ENCODE measurements at regions of chr12 and their contacts with region 1.

Region 1: GRCh38 chr12:49264738-49265515 is at the start of gene TUBA1C:
- DNase-seq: peak; percentile 95 to 99 (median 98)
- ATAC-seq: peak; percentile 85
- H3K4me3 ChIP-seq: peak within 1 kb of the TSS; percentile 90
- H3K27ac ChIP-seq: peak within 1 kb of the TSS; percentile 83
- H3K4me1 ChIP-seq: peaks cover 17 to 23% of the 10 kb centered on the region in 2 experiments
- H3K27me3 ChIP-seq: no peaks in the 10 kb centered on the region
- CTCF ChIP-seq: peak in 1 of 3 experiments; percentile 13; a peak in 1 of 6 replicates
- EP300 ChIP-seq: peak; percentile 15; the same call in 1 of the 2 replicates
- POLR2A ChIP-seq: peak; percentile 100
- RAD21 ChIP-seq: no peak
- polyA plus RNA-seq, gene TUBA1C: 776 to 1,185 TPM

Region 2: DNA sequence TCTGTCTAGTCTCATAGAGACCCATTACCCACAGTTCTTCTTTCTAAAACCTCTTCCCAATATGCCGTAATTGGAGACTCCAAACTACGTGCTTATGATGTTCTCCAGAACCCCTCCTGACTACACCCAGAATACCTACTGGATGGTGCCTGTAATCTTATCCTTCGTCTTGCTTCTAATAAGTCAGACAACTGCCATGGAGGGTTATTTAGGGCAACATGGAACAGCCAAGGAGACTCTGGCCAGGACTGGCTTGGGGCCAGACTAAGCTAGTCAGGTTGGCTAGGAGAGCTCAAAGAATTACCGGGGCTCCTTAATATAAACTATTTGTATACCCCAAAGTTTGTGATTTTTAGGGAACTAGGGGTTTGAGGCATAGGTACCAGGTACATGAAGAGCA is 1138.9 kb before region 1 on chr12:
- CTCF ChIA-PET with region 1: no interaction called
- POLR2A ChIA-PET with region 1: no interaction called
- in situ Hi-C with region 1: no loop called
- intact Hi-C with region 1: no loop called
- DNase-seq: no peak
- ATAC-seq: no peak
- H3K4me3 ChIP-seq: no peak overlapping the region
- H3K27ac ChIP-seq: no peak overlapping the region
- H3K4me1 ChIP-seq: peaks cover 4 to 9% of the 10 kb centered on the region in 2 experiments; a peak in 4 of 5 replicates
- H3K27me3 ChIP-seq: no peaks in the 10 kb centered on the region
- CTCF ChIP-seq: no peak
- EP300 ChIP-seq: no peak
- POLR2A ChIP-seq: no peak
- RAD21 ChIP-seq: no peak

Region 3: DNA sequence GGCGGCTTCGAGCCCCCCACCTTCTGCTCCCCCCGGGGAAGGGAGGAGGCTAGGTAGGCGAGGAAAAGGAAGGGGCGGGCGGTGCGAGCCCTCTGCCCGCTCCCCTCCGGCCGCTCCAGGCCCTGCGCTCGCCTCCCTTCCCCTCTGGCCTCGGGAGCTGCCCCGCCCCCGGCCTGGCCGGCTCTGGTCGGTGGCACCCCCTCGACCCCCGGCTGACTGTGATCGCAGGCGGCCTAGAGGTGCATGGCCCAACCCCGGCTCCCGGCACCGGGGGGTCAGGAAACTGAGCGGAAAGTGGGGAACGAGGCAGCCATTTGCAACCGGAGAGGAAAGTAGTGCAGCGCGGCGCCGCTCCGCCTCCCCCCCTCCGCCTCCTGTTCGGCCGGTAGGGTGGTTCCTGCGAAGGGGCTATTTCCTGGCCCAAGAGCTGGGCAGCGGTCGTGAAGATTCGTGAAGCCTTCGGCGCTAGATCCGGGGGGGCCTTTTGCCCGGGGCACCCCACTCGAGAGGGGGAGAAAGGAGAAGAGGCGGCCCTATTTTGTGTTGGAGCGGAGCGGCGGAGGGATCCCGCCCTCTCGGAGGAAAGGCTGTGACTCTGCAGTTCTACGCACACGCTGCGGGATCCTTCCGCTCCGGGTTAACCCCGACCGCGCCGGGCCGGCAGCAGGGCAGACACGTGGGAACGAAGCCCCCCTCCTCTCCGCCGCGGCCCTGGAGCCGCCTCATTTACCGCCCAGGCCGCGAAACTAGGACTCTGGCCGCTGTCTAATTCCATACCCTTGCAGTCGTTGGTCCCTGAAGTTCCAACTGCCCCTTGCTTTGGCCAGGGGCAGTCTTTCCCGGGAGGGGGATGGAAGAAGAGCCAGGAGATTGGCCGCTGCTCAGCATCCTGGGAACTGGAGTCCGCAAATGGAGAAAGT is 204.4 kb before region 1 on chr12 and contains the start of gene KMT2D:
- CTCF ChIA-PET with region 1: no interaction called
- POLR2A ChIA-PET with region 1: interaction called, 21 read pairs
- in situ Hi-C with region 1: no loop called
- intact Hi-C with region 1: no loop called
- DNase-seq: peak; percentile 89 to 96 (median 91)
- ATAC-seq: peak; percentile 72
- H3K4me3 ChIP-seq: peak within 1 kb of the TSS; percentile 94
- H3K27ac ChIP-seq: peak within 1 kb of the TSS; percentile 98
- H3K4me1 ChIP-seq: peaks cover 15 to 20% of the 10 kb centered on the region in 2 experiments; a peak in 4 of 5 replicates
- H3K27me3 ChIP-seq: no peaks in the 10 kb centered on the region
- CTCF ChIP-seq: 0 out of 6 replicates have a peak, but pooled peaks of 2 of the 3 experiments have one; percentile 6 to 13
- EP300 ChIP-seq: peak; percentile 53; the same call in 1 of the 2 replicates
- POLR2A ChIP-seq: peak; percentile 88
- RAD21 ChIP-seq: no peak
- polyA plus RNA-seq, gene KMT2D: 0.22 to 1.4 TPM

Region 4: GRCh38 chr12:49110464-49111155 is 154.3 kb before region 1 on chr12 and contains the start of gene LMBR1L:
- CTCF ChIA-PET with region 1: no interaction called
- POLR2A ChIA-PET with region 1: interaction called, 19 read pairs
- in situ Hi-C with region 1: no loop called
- intact Hi-C with region 1: no loop called
- DNase-seq: peak; percentile 99 to 100 (median 99)
- ATAC-seq: peak; percentile 97
- H3K4me3 ChIP-seq: peak within 1 kb of the TSS; percentile 81
- H3K27ac ChIP-seq: peak within 1 kb of the TSS; percentile 84
- H3K4me1 ChIP-seq: peaks cover 15 to 26% of the 10 kb centered on the region in 2 experiments; a peak in 4 of 5 replicates
- H3K27me3 ChIP-seq: no peaks in the 10 kb centered on the region
- CTCF ChIP-seq: peak; percentile 55 to 60 (median 56); a peak in 5 of 6 replicates
- EP300 ChIP-seq: no peak
- POLR2A ChIP-seq: peak; percentile 79
- RAD21 ChIP-seq: no peak; a peak in 2 of 4 replicates
- polyA plus RNA-seq, gene LMBR1L: 2.5 to 5.3 TPM

Region 5: GRCh38 chr12:49225556-49226181 is 39.3 kb before region 1 on chr12:
- CTCF ChIA-PET with region 1: no interaction called
- POLR2A ChIA-PET with region 1: interaction called, 38 read pairs
- in situ Hi-C with region 1: no loop called
- intact Hi-C with region 1: no loop called
- DNase-seq: peak in 1 of 4 experiments; percentile 59
- ATAC-seq: peak; percentile 87
- H3K4me3 ChIP-seq: no peak overlapping the region
- H3K27ac ChIP-seq: no peak overlapping the region
- H3K4me1 ChIP-seq: peaks cover 0 to 12% of the 10 kb centered on the region in 2 experiments; a peak in 3 of 5 replicates
- H3K27me3 ChIP-seq: no peaks in the 10 kb centered on the region
- CTCF ChIP-seq: peak; percentile 46 to 59 (median 47)
- EP300 ChIP-seq: no peak
- POLR2A ChIP-seq: no peak
- RAD21 ChIP-seq: peak; percentile 34 to 50

Region 6: GRCh38 chr12:49253088-49253487 is 11.8 kb before region 1 on chr12:
- CTCF ChIA-PET with region 1: no interaction called
- POLR2A ChIA-PET with region 1: interaction called, 61 read pairs
- in situ Hi-C with region 1: no loop called
- intact Hi-C with region 1: no loop called
- DNase-seq: no peak
- ATAC-seq: no peak
- H3K4me3 ChIP-seq: no peak overlapping the region
- H3K27ac ChIP-seq: no peak overlapping the region
- H3K4me1 ChIP-seq: peaks cover 12 to 16% of the 10 kb centered on the region in 2 experiments
- H3K27me3 ChIP-seq: no peaks in the 10 kb centered on the region
- CTCF ChIP-seq: no peak
- EP300 ChIP-seq: no peak
- POLR2A ChIP-seq: no peak
- RAD21 ChIP-seq: no peak

Region 7: DNA sequence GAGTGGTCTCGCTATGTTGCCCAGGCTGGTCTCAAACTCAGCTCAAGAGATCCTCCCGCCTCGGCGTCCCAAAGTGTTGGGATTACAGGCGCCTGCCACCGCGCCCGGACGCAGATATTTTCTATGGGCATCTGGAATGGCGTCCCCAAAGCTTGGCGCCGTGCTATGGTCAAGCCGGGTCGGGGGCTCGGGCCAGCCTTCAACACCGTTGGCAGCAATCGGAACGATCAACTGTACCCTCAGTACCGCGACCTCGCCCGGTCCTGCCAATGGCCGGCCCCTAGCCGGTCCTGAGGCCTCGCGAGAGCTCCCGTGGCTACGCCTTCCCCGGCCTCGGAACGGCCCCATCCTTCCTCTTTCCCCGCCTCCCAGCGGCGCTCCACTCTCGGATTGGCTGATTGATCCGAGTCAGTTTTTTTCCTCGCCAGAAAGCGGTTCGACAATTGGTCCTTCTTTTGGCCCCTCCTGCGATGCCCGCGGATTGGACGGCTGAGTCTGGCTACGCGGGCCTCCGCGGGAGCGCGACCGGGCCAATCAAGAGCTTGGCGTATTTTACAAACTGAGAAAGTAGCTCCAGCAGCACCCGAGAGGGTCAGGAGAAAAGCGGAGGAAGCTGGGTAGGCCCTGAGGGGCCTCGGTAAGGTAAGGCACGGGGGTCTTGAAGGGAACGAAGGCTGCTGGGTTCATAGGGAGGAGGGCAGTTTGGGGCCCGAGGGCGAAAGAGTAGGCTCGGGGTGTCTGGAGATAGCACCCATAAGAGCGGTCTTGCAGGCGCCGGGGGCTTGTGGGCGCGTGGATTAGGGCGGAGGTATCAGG is 58.0 kb after region 1 on chr12 and contains the start of gene TROAP:
- CTCF ChIA-PET with region 1: no interaction called
- POLR2A ChIA-PET with region 1: interaction called, 17 read pairs
- in situ Hi-C with region 1: no loop called
- intact Hi-C with region 1: no loop called
- DNase-seq: peak; percentile 99
- ATAC-seq: peak; percentile 98
- H3K4me3 ChIP-seq: peak within 1 kb of the TSS; percentile 74
- H3K27ac ChIP-seq: peak within 1 kb of the TSS; percentile 85
- H3K4me1 ChIP-seq: peaks cover 5 to 16% of the 10 kb centered on the region in 2 experiments; a peak in 3 of 5 replicates
- H3K27me3 ChIP-seq: no peaks in the 10 kb centered on the region
- CTCF ChIP-seq: no peak
- EP300 ChIP-seq: no peak
- POLR2A ChIP-seq: peak; percentile 93
- RAD21 ChIP-seq: no peak; a peak in 1 of 4 replicates
- polyA plus RNA-seq, gene TROAP: 52.1 to 53.7 TPM

Region 8: GRCh38 chr12:49366652-49367380 is 101.9 kb after region 1 on chr12:
- CTCF ChIA-PET with region 1: no interaction called
- POLR2A ChIA-PET with region 1: interaction called, 17 read pairs
- in situ Hi-C with region 1: no loop called
- intact Hi-C with region 1: no loop called
- DNase-seq: peak; percentile 75 to 97 (median 96)
- ATAC-seq: peak; percentile 90
- H3K4me3 ChIP-seq: peak overlapping the region; percentile 75
- H3K27ac ChIP-seq: peak overlapping the region; percentile 96
- H3K4me1 ChIP-seq: peaks cover 12 to 25% of the 10 kb centered on the region in 2 experiments; a peak in 3 of 5 replicates
- H3K27me3 ChIP-seq: no peaks in the 10 kb centered on the region
- CTCF ChIP-seq: peak in 2 of 3 experiments; percentile 34 to 35; a peak in 2 of 6 replicates
- EP300 ChIP-seq: no peak
- POLR2A ChIP-seq: peak; percentile 97
- RAD21 ChIP-seq: no peak; a peak in 1 of 4 replicates

Region 9: DNA sequence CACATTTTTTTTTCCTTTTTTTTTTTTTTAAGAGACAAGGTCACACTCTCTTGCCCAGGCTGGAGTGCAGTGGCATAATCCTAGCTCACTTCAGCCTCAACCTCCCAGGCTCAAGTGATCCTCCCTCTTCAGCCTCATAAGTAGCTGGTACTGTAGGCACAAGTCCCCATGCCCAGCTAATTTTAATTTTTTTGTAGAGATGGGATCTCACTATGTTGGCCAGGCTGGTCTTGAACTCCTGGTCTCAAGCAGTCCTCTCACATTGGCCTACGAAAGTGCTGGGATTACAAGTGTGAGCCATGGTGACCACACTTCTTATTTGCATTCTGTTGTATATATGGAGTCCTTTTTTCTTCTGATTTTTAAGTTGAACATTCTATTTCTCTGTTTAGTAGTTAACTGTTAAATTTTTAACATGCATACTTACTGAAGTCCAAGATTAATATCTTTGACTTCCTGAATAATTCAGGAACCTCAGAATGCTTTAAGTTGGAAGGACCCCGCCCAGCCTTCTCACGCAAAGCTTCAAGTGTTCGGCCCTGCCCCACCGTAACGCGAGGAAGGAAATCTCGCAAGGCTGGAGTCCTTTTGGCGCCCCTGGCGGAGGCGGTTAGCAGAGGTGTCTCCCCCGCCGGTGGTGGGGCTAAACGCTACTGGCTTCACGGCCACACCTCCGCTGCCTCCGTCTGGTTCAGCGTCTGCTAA is 123.9 kb after region 1 on chr12:
- CTCF ChIA-PET with region 1: no interaction called
- POLR2A ChIA-PET with region 1: no interaction called
- in situ Hi-C with region 1: no loop called
- intact Hi-C with region 1: no loop called
- DNase-seq: no peak
- ATAC-seq: no peak
- H3K4me3 ChIP-seq: no peak overlapping the region
- H3K27ac ChIP-seq: no peak overlapping the region
- H3K4me1 ChIP-seq: peaks cover 0 to 4% of the 10 kb centered on the region in 2 experiments; a peak in 3 of 5 replicates
- H3K27me3 ChIP-seq: no peaks in the 10 kb centered on the region
- CTCF ChIP-seq: no peak
- EP300 ChIP-seq: no peak
- POLR2A ChIP-seq: no peak
- RAD21 ChIP-seq: no peak

Measured in K562 (cell line).